ENCODE measurements at regions of chr2 and their contacts with region 1.

Region 1: DNA sequence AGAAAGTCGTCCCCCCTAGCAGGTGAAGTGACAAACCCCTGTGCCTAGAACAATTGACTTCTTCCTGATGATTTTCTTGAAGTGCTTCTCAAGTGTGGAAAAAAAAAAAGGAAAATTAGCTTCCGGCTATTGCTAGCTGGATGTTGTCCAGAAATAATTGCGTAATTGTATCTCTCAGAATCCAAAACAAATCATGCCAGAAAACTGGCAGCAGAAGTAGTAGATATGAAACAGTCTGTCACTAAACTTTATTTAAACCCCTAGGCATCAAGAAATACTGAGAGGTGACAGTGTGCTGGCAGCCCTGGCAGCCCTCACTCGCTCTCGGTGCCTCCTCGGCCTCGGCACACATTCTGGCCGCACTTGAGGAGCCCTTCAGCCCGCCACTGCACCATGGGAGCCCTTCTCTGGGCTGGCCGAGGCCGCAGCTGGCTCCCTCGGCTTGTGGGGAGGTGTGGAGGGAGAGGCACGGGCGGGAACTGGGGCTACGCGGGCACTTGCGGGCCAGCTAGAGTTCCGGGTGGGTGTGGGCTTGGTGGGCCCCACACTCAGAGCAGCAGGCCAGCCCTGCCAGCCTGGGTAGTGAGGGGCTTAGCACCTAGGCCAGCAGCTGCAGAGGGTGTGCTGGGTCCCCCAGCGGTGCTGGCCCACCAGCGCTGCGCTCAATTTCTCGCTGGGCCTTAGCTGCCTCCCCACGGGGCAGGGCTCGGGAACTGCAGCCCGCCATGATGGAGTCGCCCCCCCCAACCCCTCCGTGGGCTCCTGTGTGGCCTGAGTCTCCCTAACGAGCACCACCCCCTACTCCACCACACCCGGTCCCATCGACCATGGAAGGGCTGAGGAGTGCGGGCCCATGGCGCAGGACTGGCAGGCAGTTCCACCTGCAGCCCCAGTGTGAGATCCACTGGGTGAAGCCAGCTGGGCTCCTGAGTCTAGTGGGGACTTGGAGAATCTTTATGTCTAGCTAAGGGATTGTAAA is 80.5 kb upstream of the ABCA12 start:
- DNase-seq: no peak
- ATAC-seq: no peak
- H3K4me3 ChIP-seq: no peak overlapping the region
- H3K4me3 Mint-ChIP-seq: no peak overlapping the region
- H3K27ac ChIP-seq: no peak overlapping the region
- H3K27ac Mint-ChIP-seq: no peak overlapping the region
- H3K4me1 ChIP-seq: no peaks in the 10 kb centered on the region
- H3K4me1 Mint-ChIP-seq: no peaks in the 10 kb centered on the region
- H3K27me3 ChIP-seq: no peaks in the 10 kb centered on the region
- H3K27me3 Mint-ChIP-seq: no peaks in the 10 kb centered on the region
- CTCF ChIP-seq: no peak

Region 2: DNA sequence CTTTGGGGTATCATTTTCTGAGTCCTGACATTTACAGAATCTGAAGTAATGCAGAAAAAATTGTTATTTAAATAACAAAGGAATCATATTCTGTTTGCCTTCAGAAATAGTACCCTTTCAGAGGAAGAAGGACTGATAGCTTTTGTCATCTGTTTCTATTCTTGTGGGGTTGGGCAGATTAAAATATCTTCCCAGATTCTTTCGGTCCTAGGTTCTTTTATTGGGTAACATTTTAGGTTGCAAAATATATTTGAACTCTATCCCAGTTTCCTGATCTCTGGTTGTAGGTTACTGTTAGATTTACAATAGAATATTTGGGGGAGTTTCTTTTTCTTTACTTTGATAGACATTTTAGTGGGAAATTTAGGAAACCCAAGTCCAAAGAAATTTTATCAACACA is 1384.1 kb before region 1 on chr2:
- CTCF ChIA-PET with region 1: no interaction called
- POLR2A ChIA-PET with region 1: no interaction called
- intact Hi-C with region 1: loop called (anchors 5 kb)
- DNase-seq: no peak
- ATAC-seq: no peak
- H3K4me3 ChIP-seq: no peak overlapping the region
- H3K4me3 Mint-ChIP-seq: no peak overlapping the region
- H3K27ac ChIP-seq: no peak overlapping the region
- H3K27ac Mint-ChIP-seq: no peak overlapping the region
- H3K4me1 ChIP-seq: no peaks in the 10 kb centered on the region
- H3K4me1 Mint-ChIP-seq: no peaks in the 10 kb centered on the region
- H3K27me3 ChIP-seq: no peaks in the 10 kb centered on the region
- H3K27me3 Mint-ChIP-seq: no peaks in the 10 kb centered on the region
- CTCF ChIP-seq: no peak